Dorsolateral prefrontal cortex (tissue), 120 donors: ENCODE measurements at regions of chr11 and their contacts with region 1.

Region 1: DNA sequence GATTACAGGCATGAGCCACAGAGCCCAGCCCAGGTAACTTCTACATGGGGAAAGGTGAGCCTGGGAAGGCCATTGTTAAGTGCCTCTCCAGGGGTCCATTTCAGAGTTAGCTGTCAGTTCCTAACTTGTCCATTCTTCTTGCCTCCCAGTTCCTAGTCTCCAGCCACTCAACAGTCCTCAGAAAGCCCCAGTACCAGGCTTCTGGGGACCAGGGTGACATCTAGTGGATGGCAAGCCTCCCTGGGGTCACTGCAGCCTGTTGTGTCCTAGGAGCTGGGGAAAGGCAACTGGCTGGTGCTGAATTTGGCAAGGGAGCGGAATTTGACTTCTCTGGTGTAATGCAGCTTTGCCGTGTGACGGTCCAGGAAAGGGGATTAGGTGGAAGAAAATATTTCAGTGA is 2.1 kb downstream of the LGALS12 start:
- DNase-seq: peak; percentile 18 to 84 (median 75)
- H3K4me3 ChIP-seq: no peak overlapping the region
- H3K27ac ChIP-seq: peak overlapping the region in 48 of 59 donors; percentile 12 to 99 (median 96)
- H3K27me3 ChIP-seq: no peaks in the 10 kb centered on the region
- CTCF ChIP-seq: peak in 54 of 56 donors; percentile 21 to 84 (median 63)

Region 2: DNA sequence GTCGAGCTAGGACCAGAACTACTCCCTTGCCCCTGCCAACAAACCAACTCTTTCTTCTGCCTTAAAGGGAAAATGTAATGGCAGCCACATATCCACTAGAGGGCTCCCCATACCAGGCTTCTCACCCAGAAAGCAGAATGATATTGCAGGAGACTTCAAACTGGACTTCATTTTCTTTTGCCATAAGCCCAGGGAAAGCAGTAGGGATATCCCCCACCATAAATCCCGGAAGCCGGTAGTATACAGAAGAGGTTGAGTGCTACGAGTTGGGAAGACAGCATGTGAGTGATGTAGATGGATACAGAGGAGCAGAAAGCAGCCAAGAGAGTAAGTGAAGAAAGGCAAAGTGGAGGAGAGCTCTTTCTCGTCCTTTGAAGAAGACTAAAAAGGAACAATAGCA is 29.1 kb before region 1 on chr11:
- intact Hi-C with region 1: loop called (anchors 1 to 5 kb)
- DNase-seq: peak in 7 of 10 donors; percentile 24 to 77 (median 49)
- H3K4me3 ChIP-seq: peak overlapping the region in 13 of 59 donors; percentile 7 to 37 (median 20)
- H3K27ac ChIP-seq: peak overlapping the region in 52 of 59 donors; percentile 1 to 88 (median 66)
- H3K27me3 ChIP-seq: no peaks in the 10 kb centered on the region
- CTCF ChIP-seq: peak; percentile 79 to 99 (median 94)

Region 3: DNA sequence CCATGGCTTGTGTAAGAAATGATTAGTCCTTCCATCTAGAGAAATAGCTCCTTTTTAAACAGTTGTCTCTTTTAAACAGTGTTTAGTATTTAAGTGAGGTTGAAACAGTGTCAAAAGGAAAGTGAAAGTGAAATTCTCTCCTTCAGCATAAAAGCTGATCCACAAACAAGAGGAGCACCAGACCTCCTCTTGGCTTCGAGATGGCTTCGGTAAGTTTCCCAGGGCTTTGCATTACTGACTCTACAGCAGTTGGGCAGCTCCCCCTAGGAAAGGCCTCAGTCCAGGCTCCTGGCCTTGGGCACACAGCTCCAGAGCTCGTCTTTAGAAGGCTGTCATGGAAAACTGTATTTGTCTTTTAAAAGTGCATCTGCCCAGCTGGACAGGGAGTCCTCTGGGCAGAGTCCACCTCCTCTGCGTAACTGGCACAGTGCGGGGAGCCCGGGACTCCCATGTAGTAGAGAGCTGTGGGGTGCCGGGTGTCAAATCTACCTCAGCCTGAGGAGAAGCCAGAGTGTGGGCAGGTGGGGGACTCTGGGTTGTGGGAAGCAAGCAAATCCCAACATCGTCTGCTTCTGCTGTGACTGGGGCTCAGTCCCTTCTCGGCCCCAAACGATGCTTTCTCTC is 28.8 kb after region 1 on chr11 and contains the start of gene PLAAT4:
- intact Hi-C with region 1: loop called in 1 of 2 experiments (anchors 2 kb)
- DNase-seq: peak in 7 of 10 donors; percentile 42 to 66 (median 60)
- H3K4me3 ChIP-seq: peak within 1 kb of the TSS; percentile 30 to 70 (median 52)
- H3K27ac ChIP-seq: peak within 1 kb of the TSS; percentile 89 to 100 (median 98)
- H3K27me3 ChIP-seq: no peaks in the 10 kb centered on the region
- CTCF ChIP-seq: peak in 25 of 56 donors; percentile 10 to 43 (median 27)
- total RNA-seq, gene PLAAT4: 11.2 to 117 (median 25.4) TPM

Region 4: DNA sequence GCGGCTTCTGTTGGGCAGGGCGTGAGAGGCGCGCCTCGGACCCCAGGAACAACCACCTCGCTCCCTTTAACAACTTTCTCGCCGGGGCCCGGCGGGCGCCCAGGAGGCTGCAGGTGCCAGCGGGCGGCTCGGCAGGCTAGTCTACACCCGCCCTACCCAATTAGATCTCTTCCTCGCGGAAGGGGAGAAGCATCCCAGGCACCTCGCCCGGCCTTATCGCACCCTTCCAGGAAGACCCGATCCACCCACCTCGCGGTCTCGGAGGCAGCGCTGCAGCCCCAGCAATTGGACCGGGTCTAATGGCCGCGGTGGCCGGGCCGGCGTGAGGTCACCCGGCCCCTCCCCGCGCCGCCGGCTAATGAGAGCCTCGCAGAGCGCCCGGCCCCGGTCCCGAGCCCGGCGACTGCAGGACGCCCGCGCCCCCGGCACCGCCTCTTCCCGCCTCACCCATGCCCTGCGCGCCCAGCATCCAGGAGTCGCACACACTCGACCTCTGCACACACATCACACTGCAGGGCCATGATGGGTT is 106.2 kb after region 1 on chr11 and contains the start of gene PLAAT3:
- intact Hi-C with region 1: loop called in 1 of 2 experiments (anchors 5 kb)
- DNase-seq: peak; percentile 47 to 88 (median 76)
- H3K4me3 ChIP-seq: peak within 1 kb of the TSS; percentile 59 to 97 (median 87)
- H3K27ac ChIP-seq: peak within 1 kb of the TSS; percentile 74 to 100 (median 97)
- H3K27me3 ChIP-seq: no peaks in the 10 kb centered on the region
- CTCF ChIP-seq: peak in 21 of 56 donors; percentile 10 to 55 (median 24)
- total RNA-seq, gene PLAAT3: 68.4 to 465 (median 140) TPM

Region 5: DNA sequence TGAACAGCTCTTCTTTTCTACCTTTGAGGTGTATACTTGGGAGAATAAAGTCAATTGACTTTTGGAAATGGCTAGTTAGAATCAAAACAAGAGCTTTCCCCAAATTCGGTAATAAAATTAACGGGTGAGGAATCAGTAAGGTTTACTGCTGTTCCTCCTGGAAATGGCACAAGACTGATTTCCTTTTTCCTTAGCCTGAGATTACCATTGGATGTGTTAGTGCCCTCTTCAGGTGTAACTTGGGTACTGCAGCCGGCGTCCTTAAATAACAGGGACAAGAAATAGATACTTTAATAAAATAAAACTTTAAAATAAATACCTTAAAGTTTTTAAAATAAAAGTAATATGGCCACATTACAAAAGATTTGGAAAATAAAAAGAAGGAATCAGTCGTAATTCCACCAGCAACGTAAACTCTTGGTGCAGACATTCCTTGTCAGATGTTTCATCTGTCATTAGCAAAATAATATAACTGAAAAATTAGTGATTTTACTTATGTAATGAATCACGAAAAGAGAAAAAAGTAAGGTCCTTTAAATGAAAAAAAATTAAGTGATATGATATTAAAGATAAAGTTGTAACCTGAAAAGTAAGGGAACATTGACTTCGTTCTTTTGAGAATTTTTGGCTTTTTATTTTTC is 230.8 kb after region 1 on chr11:
- intact Hi-C with region 1: loop called in 1 of 2 experiments (anchors 10 kb)
- DNase-seq: peak; percentile 56 to 90 (median 66)
- H3K4me3 ChIP-seq: peak overlapping the region in 4 of 59 donors; percentile 2 to 36 (median 21)
- H3K27ac ChIP-seq: peak overlapping the region in 8 of 59 donors; percentile 4 to 53 (median 22)
- H3K27me3 ChIP-seq: no peaks in the 10 kb centered on the region
- CTCF ChIP-seq: peak; percentile 90 to 99 (median 96)